ENCODE measurements at regions of chr12 and their contacts with region 1.

Region 1: DNA sequence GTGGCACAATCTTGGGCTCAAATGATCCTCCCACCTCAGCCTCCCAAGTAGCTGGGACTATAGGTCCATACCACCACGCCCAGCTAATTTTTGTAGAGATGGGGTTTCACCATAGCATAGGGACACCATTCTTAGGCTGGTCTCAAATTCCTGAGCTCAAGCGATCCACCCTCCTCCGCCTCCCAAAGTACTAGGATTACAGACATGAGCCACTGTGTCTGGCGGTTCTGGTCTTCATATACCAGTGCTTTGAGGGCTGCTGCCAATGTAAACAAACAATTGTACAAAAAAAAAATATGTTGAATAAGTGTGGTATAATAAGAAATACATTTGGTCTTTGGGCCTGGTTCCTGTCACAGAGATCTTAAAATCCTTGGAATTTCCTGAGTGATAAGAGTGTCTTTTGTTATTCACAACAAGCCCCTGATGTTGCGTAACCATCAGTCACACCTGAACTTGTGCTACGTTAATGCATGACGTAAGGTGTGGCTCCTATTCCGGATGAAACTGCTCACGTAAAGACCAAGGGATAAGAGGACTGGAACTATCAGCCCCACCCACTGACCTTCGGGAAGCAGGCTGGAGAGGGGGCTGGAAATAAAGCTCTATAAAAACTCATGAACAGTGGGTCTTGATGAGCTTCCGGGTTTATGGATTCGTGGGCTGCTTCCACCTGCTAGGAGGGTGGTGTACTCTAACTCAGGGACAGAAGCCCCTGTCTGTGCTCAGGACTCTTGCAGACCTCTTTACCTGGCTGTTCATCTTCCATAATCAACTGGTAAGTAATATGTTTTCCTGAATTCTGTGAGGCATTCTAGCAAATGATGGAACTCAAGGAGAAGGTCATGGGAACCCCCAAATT is 16.5 kb upstream of the RIMKLB start:
- DNase-seq: no peak
- H3K4me3 Mint-ChIP-seq: no peak overlapping the region
- H3K27ac Mint-ChIP-seq: no peak overlapping the region
- H3K4me1 Mint-ChIP-seq: peaks cover 4% of the 10 kb centered on the region
- H3K27me3 Mint-ChIP-seq: no peaks in the 10 kb centered on the region

Region 2: GRCh38 chr12:8483079-8483478 is 198.2 kb before region 1 on chr12:
- CTCF ChIA-PET with region 1: no interaction called
- intact Hi-C with region 1: no loop called
- DNase-seq: peak; percentile 24
- H3K4me3 Mint-ChIP-seq: no peak overlapping the region
- H3K27ac Mint-ChIP-seq: no peak overlapping the region
- H3K4me1 Mint-ChIP-seq: peaks cover 5% of the 10 kb centered on the region
- H3K27me3 Mint-ChIP-seq: peaks cover 10% of the 10 kb centered on the region

Region 3: GRCh38 chr12:8823565-8824300 is 142.5 kb after region 1 on chr12:
- CTCF ChIA-PET with region 1: interaction called, 3 read pairs
- intact Hi-C with region 1: loop called (anchors 1 kb)
- DNase-seq: peak; percentile 15
- H3K4me3 Mint-ChIP-seq: no peak overlapping the region
- H3K27ac Mint-ChIP-seq: no peak overlapping the region
- H3K4me1 Mint-ChIP-seq: peaks cover 4% of the 10 kb centered on the region
- H3K27me3 Mint-ChIP-seq: peaks cover 3% of the 10 kb centered on the region

Measured in activated naive CD4-positive, alpha-beta T cell treated with anti-CD3 and anti-CD28 coated beads for 36 hours (primary cell).